ENCODE measurements at regions of chr10 and their contacts with region 1.

Region 1: GRCh38 chr10:122461367-122461728 is at the start of gene HTRA1:
- DNase-seq: peak; percentile 83 to 90 (median 90)
- ATAC-seq: peak; percentile 72 to 87 (median 80)
- H3K4me3 ChIP-seq: peak within 1 kb of the TSS; percentile 66 to 97 (median 83)
- H3K27ac ChIP-seq: peak within 1 kb of the TSS; percentile 33 to 86 (median 77)
- H3K4me1 ChIP-seq: peaks cover 0 to 45% (median 24%) of the 10 kb centered on the region in 12 donors
- H3K27me3 ChIP-seq: peaks cover 0 to 37% (median 0%) of the 10 kb centered on the region in 9 donors
- CTCF ChIP-seq: no peak
- POLR2A ChIP-seq: no peak
- total RNA-seq, gene HTRA1: 35.7 to 153 (median 57.6) TPM

Region 2: DNA sequence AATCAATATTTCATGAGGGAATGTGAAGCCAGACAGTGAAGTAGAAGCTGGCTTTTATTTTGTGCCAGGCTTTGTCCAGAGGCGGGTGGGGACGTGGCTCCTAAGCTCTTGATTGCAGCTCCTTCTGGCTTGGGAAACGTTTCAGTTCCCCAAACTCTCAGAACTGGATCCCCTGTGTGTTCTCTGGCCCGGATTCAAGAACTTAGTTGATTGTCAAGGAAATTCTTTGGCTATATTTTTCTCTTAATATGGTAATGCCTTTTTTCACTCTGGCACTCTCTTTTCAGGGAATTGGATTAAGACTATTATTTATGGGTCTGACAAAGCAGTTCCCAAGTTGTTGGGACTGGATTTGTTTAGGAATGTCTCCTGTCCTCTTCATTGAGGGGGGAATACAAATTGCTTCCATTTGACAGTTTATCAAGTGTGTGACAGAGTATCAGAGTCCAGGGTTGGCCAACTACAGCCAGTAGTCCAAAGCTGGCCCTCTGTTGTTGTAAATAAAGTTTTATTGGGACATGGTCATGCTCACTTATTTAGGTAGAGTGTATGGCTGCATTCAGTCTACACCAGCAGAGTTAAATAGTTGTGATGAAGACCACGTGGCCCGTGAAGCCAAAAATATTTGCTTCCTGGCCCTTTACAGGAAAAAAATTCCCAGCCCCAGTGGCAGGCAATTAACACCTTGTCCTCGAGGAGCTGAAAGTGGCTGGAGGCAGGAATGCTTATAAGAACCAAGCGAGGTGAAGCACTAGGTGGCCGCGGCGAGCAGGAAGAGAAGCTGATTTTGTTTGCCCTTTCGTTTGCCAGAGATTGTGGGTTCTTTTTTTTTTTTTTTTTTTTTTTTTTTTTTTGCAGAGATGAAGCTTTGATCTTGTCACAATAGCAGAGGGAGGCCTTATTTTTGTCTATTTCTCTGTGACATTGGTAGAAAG is 34.3 kb after region 1 on chr10:
- intact Hi-C with region 1: loop called in 4 of 10 experiments (anchors 5 kb)
- DNase-seq: peak in 2 of 5 donors; percentile 46 to 48
- ATAC-seq: no peak
- H3K4me3 ChIP-seq: no peak overlapping the region
- H3K27ac ChIP-seq: peak overlapping the region in 9 of 12 donors; percentile 14 to 75 (median 39)
- H3K4me1 ChIP-seq: peaks cover 0 to 86% (median 45%) of the 10 kb centered on the region in 12 donors
- H3K27me3 ChIP-seq: no peaks in the 10 kb centered on the region
- CTCF ChIP-seq: no peak
- POLR2A ChIP-seq: no peak

Region 3: GRCh38 chr10:122504610-122504950 is 43.2 kb after region 1 on chr10:
- intact Hi-C with region 1: loop called in 5 of 10 experiments (anchors 2 to 5 kb)
- DNase-seq: peak; percentile 89 to 94 (median 91)
- ATAC-seq: peak; percentile 92 to 99 (median 98)
- H3K4me3 ChIP-seq: no peak overlapping the region
- H3K27ac ChIP-seq: peak overlapping the region in 5 of 12 donors; percentile 4 to 62 (median 43)
- H3K4me1 ChIP-seq: peaks cover 0 to 31% (median 18%) of the 10 kb centered on the region in 12 donors
- H3K27me3 ChIP-seq: no peaks in the 10 kb centered on the region
- CTCF ChIP-seq: no peak
- POLR2A ChIP-seq: no peak